Brain microvascular endothelial cell (primary cell): ENCODE measurements at regions of chr11 and their contacts with region 1.

Region 1: DNA sequence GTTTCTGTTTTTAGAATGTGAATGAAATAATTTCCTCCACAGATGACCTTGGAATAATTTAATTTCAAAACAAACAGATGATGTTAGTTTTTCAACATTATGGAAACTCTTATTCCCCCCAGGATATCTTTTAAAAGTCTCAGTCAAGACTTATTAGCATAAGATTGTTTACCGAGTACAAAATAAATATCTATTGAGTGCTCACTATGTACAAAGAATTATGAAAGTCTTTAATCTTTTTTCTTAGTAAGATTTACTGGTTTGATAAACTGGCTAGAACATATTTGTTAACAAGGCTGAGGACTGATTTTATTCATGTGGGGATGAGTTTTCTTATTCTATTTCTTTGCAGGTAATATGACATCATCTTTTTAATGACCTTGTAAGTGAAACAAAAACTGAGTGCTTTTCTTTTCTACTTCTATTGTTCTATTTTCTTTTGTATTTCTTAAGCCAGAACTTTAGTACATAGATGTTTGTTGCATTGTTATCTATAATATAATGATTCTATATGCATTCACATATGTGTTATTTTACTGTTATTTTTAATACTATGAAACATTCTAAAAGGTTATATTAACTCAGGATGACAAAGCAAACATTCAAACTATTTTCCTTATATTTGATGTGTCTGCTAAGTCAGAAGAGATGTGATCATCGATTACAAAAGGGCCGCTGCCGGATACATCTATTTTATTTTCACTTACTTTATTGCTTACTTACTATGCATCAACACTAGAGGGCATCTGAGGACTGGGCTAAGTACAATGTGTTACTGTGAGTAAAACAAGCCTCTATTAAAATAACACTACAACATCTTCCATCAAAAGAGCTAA is 111.0 kb upstream of the ARHGAP42 start:
- DNase-seq: peak; percentile 42
- H3K4me3 ChIP-seq: no peak overlapping the region
- H3K27ac ChIP-seq: no peak overlapping the region
- H3K27me3 ChIP-seq: no peaks in the 10 kb centered on the region
- CTCF ChIP-seq: peak; percentile 67

Region 2: GRCh38 chr11:100930185-100930778 is 354.2 kb after region 1 on chr11:
- in situ Hi-C with region 1: loop called (anchors 25 kb)
- DNase-seq: peak; percentile 52
- H3K4me3 ChIP-seq: peak overlapping the region; percentile 36
- H3K27ac ChIP-seq: peak overlapping the region; percentile 56
- H3K27me3 ChIP-seq: no peaks in the 10 kb centered on the region
- CTCF ChIP-seq: no peak